Naive thymus-derived CD4-positive, alpha-beta T cell (primary cell): ENCODE measurements at regions of chr1 and their contacts with region 1.

Region 1: DNA sequence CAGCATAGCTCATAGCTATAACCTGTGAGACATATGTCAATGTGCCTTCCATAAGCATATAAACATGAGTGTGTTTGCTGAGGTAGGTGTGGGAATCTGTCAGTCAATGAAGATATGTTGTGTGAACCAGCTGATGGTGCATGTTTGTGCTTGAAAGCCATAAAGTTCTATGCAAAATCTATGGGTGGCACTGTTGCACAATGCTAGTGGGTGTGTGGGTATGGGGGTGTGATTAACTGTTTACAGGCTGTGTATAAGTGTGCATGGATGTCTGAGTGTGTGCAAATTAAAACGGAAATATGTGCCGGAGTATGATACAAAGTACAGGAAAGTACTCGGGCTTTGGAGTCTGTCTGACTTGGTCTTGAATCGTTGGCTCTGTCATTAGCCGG is 1.0 kb upstream of the ATP2B4 start:
- DNase-seq: peak in 8 of 9 donors; percentile 54 to 88 (median 84)
- ATAC-seq: peak; percentile 82
- H3K4me3 ChIP-seq: peak overlapping the region; percentile 71
- H3K4me3 Mint-ChIP-seq: peak overlapping the region; percentile 89 to 100 (median 98)
- H3K27ac ChIP-seq: peak overlapping the region; percentile 82
- H3K27ac Mint-ChIP-seq: peak overlapping the region; percentile 73 to 98 (median 96)
- H3K4me1 ChIP-seq: peaks cover 17% of the 10 kb centered on the region in 2 donors
- H3K4me1 Mint-ChIP-seq: peaks cover 28 to 66% (median 37%) of the 10 kb centered on the region in 7 donors
- H3K27me3 ChIP-seq: no peaks in the 10 kb centered on the region
- H3K27me3 Mint-ChIP-seq: no peaks in the 10 kb centered on the region

Region 2: GRCh38 chr1:203304919-203305808 is 320.5 kb before region 1 on chr1 and contains the start of gene BTG2:
- CTCF ChIA-PET with region 1: no interaction called
- POLR2A ChIA-PET with region 1: no interaction called
- intact Hi-C with region 1: loop called in 1 of 2 experiments (anchors 5 kb)
- DNase-seq: peak; percentile 83 to 94 (median 89)
- ATAC-seq: peak; percentile 90
- H3K4me3 ChIP-seq: peak within 1 kb of the TSS; percentile 86
- H3K4me3 Mint-ChIP-seq: peak within 1 kb of the TSS; percentile 89 to 100 (median 96)
- H3K27ac ChIP-seq: peak within 1 kb of the TSS; percentile 100
- H3K27ac Mint-ChIP-seq: peak within 1 kb of the TSS; percentile 96 to 100 (median 99)
- H3K4me1 ChIP-seq: peaks cover 22 to 40% of the 10 kb centered on the region in 2 donors
- H3K4me1 Mint-ChIP-seq: peaks cover 54 to 65% (median 60%) of the 10 kb centered on the region in 7 donors
- H3K27me3 ChIP-seq: no peaks in the 10 kb centered on the region
- H3K27me3 Mint-ChIP-seq: no peaks in the 10 kb centered on the region
- total RNA-seq, gene BTG2: 141 to 654 (median 241) TPM

Region 3: GRCh38 chr1:203381151-203381751 is 244.4 kb before region 1 on chr1:
- CTCF ChIA-PET with region 1: no interaction called
- POLR2A ChIA-PET with region 1: no interaction called
- intact Hi-C with region 1: no loop called
- DNase-seq: no peak
- ATAC-seq: peak; percentile 74
- H3K4me3 ChIP-seq: no peak overlapping the region
- H3K4me3 Mint-ChIP-seq: no peak overlapping the region
- H3K27ac ChIP-seq: no peak overlapping the region
- H3K27ac Mint-ChIP-seq: no peak overlapping the region
- H3K4me1 ChIP-seq: no peaks in the 10 kb centered on the region
- H3K4me1 Mint-ChIP-seq: peaks cover 0 to 6% (median 0%) of the 10 kb centered on the region in 7 donors
- H3K27me3 ChIP-seq: no peaks in the 10 kb centered on the region
- H3K27me3 Mint-ChIP-seq: peaks cover 13 to 32% (median 18%) of the 10 kb centered on the region in 5 donors

Region 4: GRCh38 chr1:203504397-203505250 is 121.0 kb before region 1 on chr1:
- CTCF ChIA-PET with region 1: interaction called, 44 read pairs
- POLR2A ChIA-PET with region 1: interaction called, 7 read pairs
- intact Hi-C with region 1: loop called (anchors 1 to 2 kb)
- DNase-seq: peak; percentile 44 to 76 (median 64)
- ATAC-seq: peak; percentile 69
- H3K4me3 ChIP-seq: no peak overlapping the region
- H3K4me3 Mint-ChIP-seq: no peak overlapping the region
- H3K27ac ChIP-seq: no peak overlapping the region
- H3K27ac Mint-ChIP-seq: peak overlapping the region in 2 of 9 donors; percentile 7 to 38
- H3K4me1 ChIP-seq: no peaks in the 10 kb centered on the region
- H3K4me1 Mint-ChIP-seq: peaks cover 0 to 12% (median 8%) of the 10 kb centered on the region in 7 donors
- H3K27me3 ChIP-seq: no peaks in the 10 kb centered on the region
- H3K27me3 Mint-ChIP-seq: peaks cover 0 to 20% (median 0%) of the 10 kb centered on the region in 5 donors

Region 5: DNA sequence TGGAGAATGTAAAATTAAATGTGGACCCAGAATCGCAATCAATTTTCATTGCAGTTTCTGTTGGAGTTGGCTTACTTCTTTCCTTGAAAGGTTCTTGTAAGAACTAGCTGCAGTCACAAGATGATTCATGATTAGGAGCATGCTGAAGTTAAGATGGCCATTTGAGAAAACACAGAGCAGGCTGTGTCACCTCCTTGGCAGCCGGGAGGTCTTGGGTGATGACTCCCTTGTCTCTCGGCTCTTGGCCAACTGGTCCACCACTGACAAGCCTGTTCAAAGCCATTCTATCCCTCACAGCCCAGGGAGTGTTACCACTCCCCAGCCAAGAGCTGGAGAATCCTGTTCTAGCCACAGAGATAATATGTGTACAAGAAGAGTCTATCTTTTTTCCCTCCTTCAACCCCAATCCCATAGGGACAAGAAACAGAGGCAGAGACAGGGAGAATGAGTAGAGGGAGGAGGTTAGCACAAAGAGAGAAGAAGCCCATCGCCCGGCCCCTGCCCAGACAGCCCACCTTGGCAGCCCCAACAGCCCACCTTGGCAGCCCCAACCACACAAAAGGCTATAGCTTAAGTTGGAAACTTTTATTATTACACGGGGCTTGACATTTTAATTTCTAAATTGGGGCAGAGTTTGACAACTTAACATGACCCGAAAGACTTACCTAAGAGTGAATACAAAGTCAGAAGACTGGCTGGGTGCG is 90.9 kb before region 1 on chr1:
- CTCF ChIA-PET with region 1: no interaction called
- POLR2A ChIA-PET with region 1: no interaction called
- intact Hi-C with region 1: no loop called
- DNase-seq: no peak
- ATAC-seq: no peak
- H3K4me3 ChIP-seq: no peak overlapping the region
- H3K4me3 Mint-ChIP-seq: no peak overlapping the region
- H3K27ac ChIP-seq: no peak overlapping the region
- H3K27ac Mint-ChIP-seq: no peak overlapping the region
- H3K4me1 ChIP-seq: no peaks in the 10 kb centered on the region
- H3K4me1 Mint-ChIP-seq: peaks cover 0 to 4% (median 1%) of the 10 kb centered on the region in 7 donors
- H3K27me3 ChIP-seq: no peaks in the 10 kb centered on the region
- H3K27me3 Mint-ChIP-seq: peaks cover 0 to 16% (median 0%) of the 10 kb centered on the region in 5 donors

Region 6: GRCh38 chr1:203612932-203613682 is 12.5 kb before region 1 on chr1:
- CTCF ChIA-PET with region 1: interaction called, 16 read pairs
- POLR2A ChIA-PET with region 1: interaction called, 10 read pairs
- intact Hi-C with region 1: no loop called
- DNase-seq: no peak
- ATAC-seq: no peak
- H3K4me3 ChIP-seq: no peak overlapping the region
- H3K4me3 Mint-ChIP-seq: peak overlapping the region in 1 of 10 donors; percentile 49
- H3K27ac ChIP-seq: no peak overlapping the region
- H3K27ac Mint-ChIP-seq: peak overlapping the region in 2 of 9 donors; percentile 58 to 76
- H3K4me1 ChIP-seq: peaks cover 0 to 6% of the 10 kb centered on the region in 2 donors
- H3K4me1 Mint-ChIP-seq: peaks cover 12 to 68% (median 18%) of the 10 kb centered on the region in 7 donors
- H3K27me3 ChIP-seq: no peaks in the 10 kb centered on the region
- H3K27me3 Mint-ChIP-seq: no peaks in the 10 kb centered on the region

Region 7: DNA sequence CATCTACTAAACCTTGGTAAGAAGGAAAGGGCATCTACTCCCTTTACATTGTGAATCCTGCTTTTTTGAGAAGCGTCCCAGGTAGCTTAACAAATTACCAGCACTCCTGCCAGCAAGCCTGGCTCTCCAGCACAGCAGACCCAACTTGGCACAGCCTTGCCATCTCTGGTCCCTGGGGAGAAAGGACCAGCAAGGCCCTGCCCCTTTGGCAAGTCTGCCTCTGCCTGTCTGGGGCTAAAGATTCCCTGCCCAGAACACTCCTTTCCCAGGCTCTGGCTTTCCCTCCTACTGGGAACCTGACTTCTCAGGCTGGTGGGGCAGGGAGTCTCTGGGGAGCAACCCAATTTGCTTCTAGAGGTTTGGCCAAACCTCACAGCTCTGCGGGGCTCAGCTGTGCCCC is 69.5 kb after region 1 on chr1:
- CTCF ChIA-PET with region 1: interaction called, 100 read pairs
- POLR2A ChIA-PET with region 1: interaction called, 7 read pairs
- intact Hi-C with region 1: no loop called
- DNase-seq: no peak
- ATAC-seq: no peak
- H3K4me3 ChIP-seq: no peak overlapping the region
- H3K4me3 Mint-ChIP-seq: no peak overlapping the region
- H3K27ac ChIP-seq: no peak overlapping the region
- H3K27ac Mint-ChIP-seq: peak overlapping the region in 4 of 9 donors; percentile 4 to 76 (median 32)
- H3K4me1 ChIP-seq: peaks cover 10 to 19% of the 10 kb centered on the region in 2 donors
- H3K4me1 Mint-ChIP-seq: peaks cover 20 to 47% (median 32%) of the 10 kb centered on the region in 7 donors
- H3K27me3 ChIP-seq: no peaks in the 10 kb centered on the region
- H3K27me3 Mint-ChIP-seq: no peaks in the 10 kb centered on the region

Region 8: DNA sequence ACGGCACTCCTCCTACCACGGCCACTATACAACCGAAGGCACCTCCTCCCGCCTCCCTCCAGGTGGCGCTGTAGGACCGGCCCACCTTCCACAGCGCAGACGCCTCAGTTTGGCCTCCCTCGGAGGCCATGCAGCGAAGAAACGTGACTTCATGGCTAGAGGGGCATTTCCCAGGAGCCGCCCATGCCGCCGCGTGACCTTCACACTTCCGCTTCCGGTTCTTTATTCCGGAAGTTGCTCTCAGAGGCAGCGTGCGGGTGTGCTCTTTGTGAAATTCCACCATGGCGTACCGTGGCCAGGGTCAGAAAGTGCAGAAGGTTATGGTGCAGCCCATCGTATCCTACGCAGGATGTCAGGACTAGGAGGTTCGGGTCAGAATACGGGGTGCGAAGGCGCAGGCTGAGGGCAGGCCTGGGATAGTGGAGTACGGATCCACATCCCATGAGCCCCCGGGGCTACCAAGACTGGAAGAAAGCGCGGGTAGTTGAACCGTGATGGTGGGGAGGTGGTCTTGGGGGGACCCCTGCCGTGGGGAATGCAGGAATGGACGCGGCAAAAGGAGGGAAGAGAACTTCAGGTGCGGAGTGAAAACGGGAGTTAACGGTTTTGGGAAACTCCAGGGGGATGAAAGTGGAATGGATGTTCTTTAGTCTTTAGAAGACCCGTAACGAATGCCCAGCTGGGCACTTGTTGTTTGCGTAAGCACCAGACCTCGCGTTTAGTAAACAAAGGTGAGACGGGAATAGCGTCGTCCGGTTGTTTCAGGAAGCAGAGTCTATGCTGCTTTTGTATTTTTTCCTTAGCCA is 236.0 kb after region 1 on chr1 and contains the start of gene SNRPE:
- CTCF ChIA-PET with region 1: no interaction called
- POLR2A ChIA-PET with region 1: no interaction called
- intact Hi-C with region 1: loop called (anchors 1 to 5 kb)
- DNase-seq: peak; percentile 93 to 98 (median 97)
- ATAC-seq: peak; percentile 100
- H3K4me3 ChIP-seq: peak within 1 kb of the TSS; percentile 82
- H3K4me3 Mint-ChIP-seq: peak within 1 kb of the TSS; percentile 97 to 100 (median 99)
- H3K27ac ChIP-seq: peak within 1 kb of the TSS; percentile 89
- H3K27ac Mint-ChIP-seq: peak within 1 kb of the TSS; percentile 95 to 100 (median 98)
- H3K4me1 ChIP-seq: peaks cover 10 to 13% of the 10 kb centered on the region in 2 donors
- H3K4me1 Mint-ChIP-seq: peaks cover 11 to 34% (median 23%) of the 10 kb centered on the region in 7 donors
- H3K27me3 ChIP-seq: no peaks in the 10 kb centered on the region
- H3K27me3 Mint-ChIP-seq: no peaks in the 10 kb centered on the region
- total RNA-seq, gene SNRPE: 54.4 to 156 (median 81.7) TPM